GM23248 (cell line): ENCODE measurements at regions of chr2 and their contacts with region 1.

Region 1: DNA sequence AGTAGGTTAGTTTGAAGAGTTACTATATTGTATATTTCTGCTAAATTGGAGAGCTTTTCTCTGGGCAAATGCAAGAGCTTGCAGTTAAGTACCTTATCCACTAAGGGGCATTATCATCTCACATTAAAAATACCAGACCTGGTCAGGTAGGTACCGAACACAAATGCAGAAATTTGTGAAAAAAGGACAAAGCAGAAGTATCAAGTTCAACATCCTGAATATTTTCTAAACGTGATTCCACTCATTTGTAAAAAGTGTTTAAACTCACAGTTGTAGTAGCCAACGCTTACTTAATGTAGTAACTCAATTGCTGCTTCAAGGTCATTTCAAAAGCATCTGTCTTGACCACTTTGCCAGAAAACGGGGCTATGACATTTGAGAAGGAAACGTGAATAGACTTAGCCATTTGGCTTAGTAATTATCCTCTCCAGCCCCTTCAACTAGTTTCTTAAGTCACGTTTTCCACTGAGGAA is 52.1 kb downstream of the CYRIA start:
- DNase-seq: peak; percentile 23
- H3K4me3 ChIP-seq: no peak overlapping the region
- H3K27ac ChIP-seq: no peak overlapping the region
- H3K4me1 ChIP-seq: no peaks in the 10 kb centered on the region
- H3K27me3 ChIP-seq: peaks cover 14% of the 10 kb centered on the region

Region 2: GRCh38 chr2:16525265-16525887 is 88.2 kb before region 1 on chr2:
- in situ Hi-C with region 1: no loop called
- DNase-seq: no peak
- H3K4me3 ChIP-seq: no peak overlapping the region
- H3K27ac ChIP-seq: no peak overlapping the region
- H3K4me1 ChIP-seq: no peaks in the 10 kb centered on the region
- H3K27me3 ChIP-seq: no peaks in the 10 kb centered on the region

Region 3: GRCh38 chr2:16756831-16757644 is 143.5 kb after region 1 on chr2:
- in situ Hi-C with region 1: loop called (anchors 10 kb)
- DNase-seq: peak; percentile 70
- H3K4me3 ChIP-seq: no peak overlapping the region
- H3K27ac ChIP-seq: no peak overlapping the region
- H3K4me1 ChIP-seq: no peaks in the 10 kb centered on the region
- H3K27me3 ChIP-seq: peaks cover 2% of the 10 kb centered on the region; the same call in 1 of the 2 replicates